CD4-positive, alpha-beta T cell (primary cell): ENCODE measurements at regions of chr22 and their contacts with region 1.

Region 1: GRCh38 chr22:32142600-32142999 is 16.5 kb downstream of the C22orf42 start:
- DNase-seq: peak in 1 of 14 experiments; percentile 17
- ATAC-seq: no peak
- H3K4me3 ChIP-seq: no peak overlapping the region
- H3K4me3 Mint-ChIP-seq: no peak overlapping the region
- H3K27ac ChIP-seq: no peak overlapping the region
- H3K27ac Mint-ChIP-seq: peak overlapping the region; percentile 67
- H3K4me1 ChIP-seq: peaks cover 36% of the 10 kb centered on the region
- H3K4me1 Mint-ChIP-seq: peaks cover 44% of the 10 kb centered on the region
- H3K27me3 ChIP-seq: no peaks in the 10 kb centered on the region
- H3K27me3 Mint-ChIP-seq: no peaks in the 10 kb centered on the region
- CTCF ChIP-seq: no peak

Region 2: DNA sequence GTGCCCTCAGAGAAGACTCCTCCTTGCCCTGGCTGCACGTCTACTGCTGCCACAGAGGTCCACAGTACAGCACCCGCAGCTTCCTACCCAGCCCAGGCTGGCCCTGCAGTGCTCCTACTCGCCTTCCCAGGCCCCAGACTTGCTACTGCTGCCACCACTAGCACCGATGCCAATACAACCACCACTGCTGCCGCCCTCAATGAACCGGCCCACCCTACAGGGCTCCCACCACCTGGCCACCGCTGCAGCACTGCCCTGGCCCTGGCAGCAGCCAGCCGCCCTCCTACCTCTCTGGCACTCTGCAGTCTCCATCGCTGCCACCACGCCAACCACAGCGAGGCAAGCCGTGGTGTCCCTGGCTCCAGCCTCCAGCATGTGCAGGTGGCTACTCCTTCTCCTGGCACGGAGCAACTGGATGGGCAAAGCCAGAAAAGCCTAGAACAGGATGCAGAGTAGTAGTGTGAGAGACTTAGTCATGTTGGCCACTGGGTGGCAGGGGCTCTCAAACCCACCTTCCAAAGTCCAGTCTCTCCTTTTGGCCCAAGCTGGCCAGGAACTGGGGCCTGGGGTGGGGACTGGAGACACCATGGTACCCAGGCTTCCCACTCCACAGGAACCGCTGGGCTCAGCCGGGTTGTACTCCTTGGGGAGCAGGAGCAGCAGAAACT is 22.9 kb before region 1 on chr22:
- CTCF ChIA-PET with region 1: no interaction called
- POLR2A ChIA-PET with region 1: no interaction called
- intact Hi-C with region 1: no loop called
- DNase-seq: no peak
- ATAC-seq: no peak
- H3K4me3 ChIP-seq: no peak overlapping the region
- H3K4me3 Mint-ChIP-seq: no peak overlapping the region
- H3K27ac ChIP-seq: no peak overlapping the region
- H3K27ac Mint-ChIP-seq: no peak overlapping the region
- H3K4me1 ChIP-seq: peaks cover 2% of the 10 kb centered on the region
- H3K4me1 Mint-ChIP-seq: no peaks in the 10 kb centered on the region
- H3K27me3 ChIP-seq: peaks cover 0 to under 1% of the 10 kb centered on the region in 2 experiments
- H3K27me3 Mint-ChIP-seq: peaks cover 4% of the 10 kb centered on the region
- CTCF ChIP-seq: no peak

Region 3: DNA sequence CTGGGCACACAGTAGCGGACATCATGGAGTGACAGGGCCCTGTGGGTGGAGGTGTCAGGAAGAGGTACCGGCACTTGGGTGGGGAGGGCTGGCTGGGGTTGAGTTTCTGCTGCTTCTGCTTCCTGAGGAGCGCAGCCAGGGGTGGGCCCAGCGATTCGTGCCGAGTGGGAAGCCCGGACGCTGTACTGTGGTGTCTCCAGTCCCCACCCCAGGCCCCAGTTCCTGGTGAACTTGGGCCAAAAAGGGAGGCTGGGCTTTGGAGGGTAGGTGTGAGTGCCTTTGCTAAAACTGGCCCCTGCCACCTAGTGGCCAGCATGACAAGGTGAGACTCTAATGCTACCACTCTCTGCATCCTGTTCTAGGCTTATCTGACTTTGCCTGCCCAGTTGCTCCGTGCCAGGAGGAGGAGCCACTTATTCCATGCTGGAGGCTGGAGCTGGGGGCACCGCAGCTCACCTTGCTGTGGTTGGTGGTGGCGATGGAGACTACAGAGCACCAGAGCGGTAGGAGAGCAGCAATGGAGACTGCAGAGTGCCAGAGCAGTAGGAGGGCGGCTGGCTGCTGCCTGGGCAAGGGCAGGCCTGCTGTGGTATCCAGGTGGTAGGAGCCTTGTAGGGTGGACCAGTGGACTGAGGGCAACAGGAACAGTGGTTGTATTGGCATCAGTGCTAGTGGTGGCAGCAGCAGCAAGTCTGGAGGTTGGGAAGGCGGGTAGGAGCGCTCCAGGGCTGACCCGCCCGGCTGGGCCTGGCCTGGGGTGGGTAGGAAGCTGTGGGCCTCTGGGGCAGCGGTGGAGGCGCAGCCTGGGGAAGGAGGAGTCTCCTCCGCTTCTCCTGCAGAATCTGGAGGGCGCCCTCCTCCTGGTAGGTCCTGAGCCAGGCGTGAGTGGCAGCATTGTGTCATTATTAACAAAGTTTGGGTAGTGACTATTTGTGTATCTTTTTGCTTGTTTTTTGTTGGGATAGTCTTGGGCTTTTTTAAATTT is 64.5 kb after region 1 on chr22:
- CTCF ChIA-PET with region 1: no interaction called
- POLR2A ChIA-PET with region 1: no interaction called
- intact Hi-C with region 1: no loop called
- DNase-seq: peak in 8 of 14 experiments; percentile 20 to 71 (median 50)
- ATAC-seq: no peak
- H3K4me3 ChIP-seq: no peak overlapping the region
- H3K4me3 Mint-ChIP-seq: peak overlapping the region; percentile 49
- H3K27ac ChIP-seq: no peak overlapping the region
- H3K27ac Mint-ChIP-seq: no peak overlapping the region
- H3K4me1 ChIP-seq: peaks cover 46% of the 10 kb centered on the region
- H3K4me1 Mint-ChIP-seq: peaks cover 35% of the 10 kb centered on the region
- H3K27me3 ChIP-seq: peaks cover 9% of the 10 kb centered on the region in 2 experiments
- H3K27me3 Mint-ChIP-seq: peaks cover 37% of the 10 kb centered on the region
- CTCF ChIP-seq: peak; percentile 66

Region 4: GRCh38 chr22:32411829-32412592 is 269.4 kb after region 1 on chr22 and contains the start of gene RTCB:
- CTCF ChIA-PET with region 1: no interaction called
- POLR2A ChIA-PET with region 1: no interaction called
- intact Hi-C with region 1: loop called in 1 of 2 experiments (anchors 2 kb)
- DNase-seq: peak; percentile 88 to 96 (median 92)
- ATAC-seq: peak; percentile 85
- H3K4me3 ChIP-seq: peak within 1 kb of the TSS; percentile 72
- H3K4me3 Mint-ChIP-seq: peak within 1 kb of the TSS; percentile 98
- H3K27ac ChIP-seq: peak within 1 kb of the TSS; percentile 25 to 76
- H3K27ac Mint-ChIP-seq: peak within 1 kb of the TSS; percentile 85
- H3K4me1 ChIP-seq: peaks cover 23% of the 10 kb centered on the region
- H3K4me1 Mint-ChIP-seq: peaks cover 55% of the 10 kb centered on the region
- H3K27me3 ChIP-seq: no peaks in the 10 kb centered on the region
- H3K27me3 Mint-ChIP-seq: peaks cover 7% of the 10 kb centered on the region
- CTCF ChIP-seq: no peak
- total RNA-seq, gene RTCB: 30.1 to 36.0 TPM